B cell (primary cell): ENCODE measurements at regions of chr16 and their contacts with region 1.

Region 1: GRCh38 chr16:8963825-8964441 is at the start of gene USP7:
- DNase-seq: peak; percentile 93
- ATAC-seq: peak; percentile 88
- H3K4me3 ChIP-seq: peak within 1 kb of the TSS; percentile 56 to 80 (median 65)
- H3K4me3 Mint-ChIP-seq: peak within 1 kb of the TSS; percentile 90
- H3K27ac ChIP-seq: peak within 1 kb of the TSS; percentile 87 to 89
- H3K27ac Mint-ChIP-seq: peak within 1 kb of the TSS; percentile 95
- H3K4me1 ChIP-seq: peaks cover 35 to 39% of the 10 kb centered on the region in 2 donors
- H3K4me1 Mint-ChIP-seq: peaks cover 39% of the 10 kb centered on the region
- H3K27me3 ChIP-seq: peaks cover 0 to 4% (median 0%) of the 10 kb centered on the region in 4 experiments
- H3K27me3 Mint-ChIP-seq: peaks cover 5% of the 10 kb centered on the region
- CTCF ChIP-seq: no peak
- total RNA-seq, gene USP7: 223 and 232 TPM in 2 replicates

Region 2: GRCh38 chr16:8885674-8886592 is 78.0 kb before region 1 on chr16:
- CTCF ChIA-PET with region 1: interaction called, 3 read pairs
- POLR2A ChIA-PET with region 1: interaction called, 4 read pairs
- intact Hi-C with region 1: loop called (anchors 1 kb)
- DNase-seq: peak; percentile 39
- ATAC-seq: no peak
- H3K4me3 ChIP-seq: no peak overlapping the region
- H3K4me3 Mint-ChIP-seq: no peak overlapping the region
- H3K27ac ChIP-seq: no peak overlapping the region
- H3K27ac Mint-ChIP-seq: peak overlapping the region; percentile 71
- H3K4me1 ChIP-seq: peaks cover 5 to 21% of the 10 kb centered on the region in 2 donors
- H3K4me1 Mint-ChIP-seq: peaks cover 23% of the 10 kb centered on the region
- H3K27me3 ChIP-seq: peaks cover 0 to 11% (median 5%) of the 10 kb centered on the region in 4 experiments
- H3K27me3 Mint-ChIP-seq: peaks cover 12% of the 10 kb centered on the region
- CTCF ChIP-seq: no peak

Region 3: DNA sequence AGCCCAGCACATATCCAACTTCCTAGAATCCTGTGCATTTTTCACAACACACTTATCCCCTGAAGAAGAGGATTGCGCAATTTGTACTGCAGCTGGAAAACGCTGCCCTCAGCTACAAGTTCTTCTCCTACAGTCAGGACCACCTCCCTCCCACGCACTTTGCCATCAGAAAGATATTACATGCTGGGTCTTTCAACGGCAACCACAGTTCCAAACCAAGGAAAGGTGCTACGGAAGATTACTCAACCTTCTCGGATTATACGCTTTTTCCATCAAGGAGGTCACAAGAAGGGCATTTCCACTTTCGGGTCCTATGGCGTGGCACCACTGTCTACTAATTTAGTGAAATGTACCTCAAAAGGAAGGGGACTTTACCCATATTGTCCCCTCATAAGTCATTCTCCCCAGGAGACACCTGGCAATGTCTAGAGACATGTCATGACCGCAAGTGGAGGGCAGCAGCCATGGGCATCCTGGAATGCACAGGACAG is 35.4 kb before region 1 on chr16:
- CTCF ChIA-PET with region 1: interaction called, 3 read pairs
- POLR2A ChIA-PET with region 1: no interaction called
- intact Hi-C with region 1: loop called (anchors 5 kb)
- DNase-seq: no peak
- ATAC-seq: no peak
- H3K4me3 ChIP-seq: no peak overlapping the region
- H3K4me3 Mint-ChIP-seq: no peak overlapping the region
- H3K27ac ChIP-seq: no peak overlapping the region
- H3K27ac Mint-ChIP-seq: no peak overlapping the region
- H3K4me1 ChIP-seq: peaks cover 12 to 21% of the 10 kb centered on the region in 2 donors
- H3K4me1 Mint-ChIP-seq: peaks cover 59% of the 10 kb centered on the region
- H3K27me3 ChIP-seq: no peaks in the 10 kb centered on the region
- H3K27me3 Mint-ChIP-seq: no peaks in the 10 kb centered on the region
- CTCF ChIP-seq: no peak

Region 4: GRCh38 chr16:8936421-8936820 is 27.5 kb before region 1 on chr16:
- CTCF ChIA-PET with region 1: interaction called, 14 read pairs
- POLR2A ChIA-PET with region 1: no interaction called
- intact Hi-C with region 1: loop called (anchors 2 kb)
- DNase-seq: peak; percentile 69
- ATAC-seq: peak; percentile 89
- H3K4me3 ChIP-seq: no peak overlapping the region
- H3K4me3 Mint-ChIP-seq: no peak overlapping the region
- H3K27ac ChIP-seq: no peak overlapping the region
- H3K27ac Mint-ChIP-seq: peak overlapping the region; percentile 7
- H3K4me1 ChIP-seq: peaks cover 58 to 63% of the 10 kb centered on the region in 2 donors
- H3K4me1 Mint-ChIP-seq: peaks cover 81% of the 10 kb centered on the region
- H3K27me3 ChIP-seq: no peaks in the 10 kb centered on the region
- H3K27me3 Mint-ChIP-seq: no peaks in the 10 kb centered on the region
- CTCF ChIP-seq: peak; percentile 73

Region 5: GRCh38 chr16:8951447-8952280 is 12.3 kb before region 1 on chr16:
- CTCF ChIA-PET with region 1: interaction called, 5 read pairs
- POLR2A ChIA-PET with region 1: interaction called, 10 read pairs
- intact Hi-C with region 1: loop called (anchors 1 kb)
- DNase-seq: peak; percentile 51
- ATAC-seq: peak; percentile 74
- H3K4me3 ChIP-seq: peak overlapping the region in 1 of 5 experiments; percentile 6
- H3K4me3 Mint-ChIP-seq: peak overlapping the region; percentile 51
- H3K27ac ChIP-seq: no peak overlapping the region
- H3K27ac Mint-ChIP-seq: no peak overlapping the region
- H3K4me1 ChIP-seq: peaks cover 82 to 92% of the 10 kb centered on the region in 2 donors
- H3K4me1 Mint-ChIP-seq: peaks cover 79% of the 10 kb centered on the region
- H3K27me3 ChIP-seq: no peaks in the 10 kb centered on the region
- H3K27me3 Mint-ChIP-seq: no peaks in the 10 kb centered on the region
- CTCF ChIP-seq: no peak